PC-9 (cell line): ENCODE measurements at regions of chr11 and their contacts with region 1.

Region 1: DNA sequence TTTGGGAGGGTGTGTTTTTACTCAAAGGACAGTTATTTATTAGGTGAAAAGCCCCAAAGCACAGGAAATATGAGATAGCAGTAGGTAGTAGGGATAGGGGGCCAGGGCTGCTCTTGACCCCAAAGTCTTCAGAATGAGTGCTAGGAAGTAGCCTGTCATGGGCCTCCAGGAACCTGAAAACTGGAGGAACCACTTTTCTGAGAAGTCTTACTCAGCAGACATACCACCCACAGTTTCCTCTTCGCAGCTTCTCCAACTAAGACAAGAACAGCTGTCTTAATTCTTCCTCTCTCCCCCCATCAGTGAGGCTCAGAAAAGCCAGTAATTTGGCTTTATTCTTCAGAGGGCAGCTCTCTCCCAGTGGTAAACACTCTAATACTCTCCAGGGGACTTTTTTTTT is 84.0 kb upstream of the CTSC start:
- DNase-seq: peak; percentile 10 to 64
- H3K4me3 ChIP-seq: no peak overlapping the region
- H3K27ac ChIP-seq: peak overlapping the region; percentile 10; the same call in 1 of the 2 replicates
- H3K4me1 ChIP-seq: peaks cover 45% of the 10 kb centered on the region
- H3K27me3 ChIP-seq: no peaks in the 10 kb centered on the region
- CTCF ChIP-seq: no peak

Region 2: GRCh38 chr11:88402192-88402715 is 19.3 kb before region 1 on chr11:
- CTCF ChIA-PET with region 1: no interaction called
- POLR2A ChIA-PET with region 1: no interaction called
- intact Hi-C with region 1: no loop called
- DNase-seq: peak in 1 of 2 experiments; percentile 98
- H3K4me3 ChIP-seq: no peak overlapping the region
- H3K27ac ChIP-seq: peak overlapping the region; percentile 85
- H3K4me1 ChIP-seq: peaks cover 55% of the 10 kb centered on the region
- H3K27me3 ChIP-seq: no peaks in the 10 kb centered on the region
- CTCF ChIP-seq: no peak

Region 3: DNA sequence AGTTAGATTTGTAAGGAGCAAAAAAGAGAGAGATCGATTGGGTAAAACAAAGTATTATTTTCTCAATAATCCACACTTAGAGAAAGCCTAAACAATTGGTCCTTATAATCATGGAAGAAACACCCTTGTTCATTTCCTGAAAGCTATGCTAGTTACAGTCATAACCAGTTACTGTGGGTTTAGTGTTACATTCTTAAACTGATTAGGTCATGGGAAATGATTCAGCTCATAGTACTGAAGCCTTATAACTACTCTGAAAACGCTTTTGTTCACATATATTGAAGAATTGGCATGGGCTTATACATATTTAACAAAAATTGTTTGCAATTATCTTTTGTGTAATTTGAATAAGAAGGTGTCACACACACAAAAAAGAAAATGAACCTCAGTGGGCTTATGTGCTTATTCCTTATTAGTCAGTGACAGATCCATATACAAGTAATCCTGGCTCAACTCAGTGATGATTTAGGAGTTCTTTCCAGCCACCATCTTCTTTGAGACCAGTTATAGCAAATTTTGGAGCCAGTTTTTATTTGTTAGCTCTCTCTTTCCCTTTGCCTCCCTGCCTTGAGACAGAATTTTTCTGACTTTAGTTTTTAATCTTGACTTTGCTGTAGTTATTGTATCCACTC is 114.5 kb after region 1 on chr11:
- CTCF ChIA-PET with region 1: no interaction called
- POLR2A ChIA-PET with region 1: no interaction called
- intact Hi-C with region 1: loop called (anchors 5 kb)
- DNase-seq: peak in 1 of 2 experiments; percentile 90
- H3K4me3 ChIP-seq: no peak overlapping the region; the same call in 1 of the 2 replicates
- H3K27ac ChIP-seq: peak overlapping the region; percentile 83
- H3K4me1 ChIP-seq: peaks cover 42% of the 10 kb centered on the region
- H3K27me3 ChIP-seq: no peaks in the 10 kb centered on the region
- CTCF ChIP-seq: no peak